HepG2 (cell line): ENCODE measurements at regions of chr11 and their contacts with region 1.

Region 1: DNA sequence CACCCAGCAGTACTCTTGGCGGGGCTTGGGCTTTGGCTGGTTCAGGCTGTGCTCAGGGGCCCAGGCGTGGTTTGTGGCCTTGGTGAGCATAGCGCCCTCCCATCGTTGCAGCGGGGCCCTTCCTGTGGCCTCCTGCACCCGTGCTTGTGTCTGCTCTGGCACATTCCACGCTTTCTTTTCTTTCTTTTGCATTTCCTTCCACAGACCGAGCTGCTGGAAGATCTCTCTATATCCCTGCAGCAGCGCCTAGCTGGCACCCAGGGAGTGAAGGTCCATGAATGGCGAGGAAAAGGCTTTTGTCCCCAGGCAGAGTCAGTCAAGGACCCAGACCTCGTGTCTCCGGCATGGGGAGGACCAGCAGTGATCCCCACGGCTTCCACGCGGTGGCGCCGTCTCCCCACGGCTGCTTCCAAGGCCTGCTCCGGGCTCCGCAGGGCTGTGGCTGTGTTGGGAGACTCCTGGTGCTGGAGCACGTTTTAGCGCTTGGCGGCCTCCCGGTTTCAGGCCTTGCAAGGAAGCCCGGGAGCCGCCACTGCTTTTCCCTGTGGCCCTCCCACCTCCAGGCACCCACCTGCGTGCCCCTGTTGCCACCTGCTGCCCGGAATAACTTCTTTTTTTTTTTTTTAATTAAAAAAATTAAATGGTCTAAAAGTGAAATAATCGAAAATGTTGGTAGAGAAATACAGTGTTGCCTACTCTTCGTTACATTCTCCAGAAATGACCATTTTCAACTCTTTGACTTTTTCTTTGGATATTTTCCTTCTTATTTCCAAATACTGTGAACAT is 28.5 kb downstream of the GLB1L2 start:
- DNase-seq: peak; percentile 65
- ATAC-seq: peak; percentile 97
- H3K4me3 ChIP-seq: no peak overlapping the region
- H3K27ac ChIP-seq: no peak overlapping the region
- H3K4me1 ChIP-seq: peaks cover 6% of the 10 kb centered on the region
- H3K27me3 ChIP-seq: peaks cover 15 to 57% of the 10 kb centered on the region in 2 experiments
- CTCF ChIP-seq: peak; percentile 97
- EP300 ChIP-seq: no peak
- POLR2A ChIP-seq: no peak
- RAD21 ChIP-seq: peak; percentile 97

Region 2: GRCh38 chr11:134417871-134418840 is 57.9 kb after region 1 on chr11:
- CTCF ChIA-PET with region 1: no interaction called
- POLR2A ChIA-PET with region 1: no interaction called
- in situ Hi-C with region 1: no loop called
- intact Hi-C with region 1: no loop called
- DNase-seq: no peak
- ATAC-seq: peak; percentile 44; the same call in 1 of the 3 replicates
- H3K4me3 ChIP-seq: no peak overlapping the region
- H3K27ac ChIP-seq: no peak overlapping the region
- H3K4me1 ChIP-seq: no peaks in the 10 kb centered on the region
- H3K27me3 ChIP-seq: peaks cover 1 to 38% of the 10 kb centered on the region in 2 experiments; a peak in 4 of 5 replicates
- CTCF ChIP-seq: no peak
- EP300 ChIP-seq: no peak
- POLR2A ChIP-seq: no peak
- RAD21 ChIP-seq: no peak

Region 3: DNA sequence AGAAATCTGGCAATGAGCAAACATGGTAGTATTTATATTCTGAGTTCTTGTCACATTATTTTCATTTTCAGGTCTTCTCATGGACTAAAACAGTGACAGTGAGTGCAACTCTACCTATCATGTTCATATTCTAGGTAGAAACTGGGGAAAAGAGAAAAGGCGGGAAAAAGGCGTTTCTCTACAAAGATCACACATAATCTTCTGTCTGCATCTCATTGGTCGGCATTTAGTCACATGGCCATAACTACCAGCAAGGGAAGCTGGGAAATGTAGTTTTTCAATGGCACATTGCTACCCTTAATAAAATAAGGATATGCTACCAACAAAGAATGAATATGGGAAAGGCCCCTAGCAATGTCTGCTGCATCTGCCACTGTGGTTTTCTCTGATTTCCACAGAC is 109.4 kb after region 1 on chr11:
- CTCF ChIA-PET with region 1: no interaction called
- POLR2A ChIA-PET with region 1: no interaction called
- in situ Hi-C with region 1: no loop called
- intact Hi-C with region 1: no loop called
- DNase-seq: no peak
- ATAC-seq: no peak
- H3K4me3 ChIP-seq: no peak overlapping the region
- H3K27ac ChIP-seq: no peak overlapping the region
- H3K4me1 ChIP-seq: peaks cover 25% of the 10 kb centered on the region
- H3K27me3 ChIP-seq: peaks cover 0 to 23% of the 10 kb centered on the region in 2 experiments; a peak in 3 of 5 replicates
- CTCF ChIP-seq: no peak
- EP300 ChIP-seq: no peak
- POLR2A ChIP-seq: no peak
- RAD21 ChIP-seq: no peak

Region 4: DNA sequence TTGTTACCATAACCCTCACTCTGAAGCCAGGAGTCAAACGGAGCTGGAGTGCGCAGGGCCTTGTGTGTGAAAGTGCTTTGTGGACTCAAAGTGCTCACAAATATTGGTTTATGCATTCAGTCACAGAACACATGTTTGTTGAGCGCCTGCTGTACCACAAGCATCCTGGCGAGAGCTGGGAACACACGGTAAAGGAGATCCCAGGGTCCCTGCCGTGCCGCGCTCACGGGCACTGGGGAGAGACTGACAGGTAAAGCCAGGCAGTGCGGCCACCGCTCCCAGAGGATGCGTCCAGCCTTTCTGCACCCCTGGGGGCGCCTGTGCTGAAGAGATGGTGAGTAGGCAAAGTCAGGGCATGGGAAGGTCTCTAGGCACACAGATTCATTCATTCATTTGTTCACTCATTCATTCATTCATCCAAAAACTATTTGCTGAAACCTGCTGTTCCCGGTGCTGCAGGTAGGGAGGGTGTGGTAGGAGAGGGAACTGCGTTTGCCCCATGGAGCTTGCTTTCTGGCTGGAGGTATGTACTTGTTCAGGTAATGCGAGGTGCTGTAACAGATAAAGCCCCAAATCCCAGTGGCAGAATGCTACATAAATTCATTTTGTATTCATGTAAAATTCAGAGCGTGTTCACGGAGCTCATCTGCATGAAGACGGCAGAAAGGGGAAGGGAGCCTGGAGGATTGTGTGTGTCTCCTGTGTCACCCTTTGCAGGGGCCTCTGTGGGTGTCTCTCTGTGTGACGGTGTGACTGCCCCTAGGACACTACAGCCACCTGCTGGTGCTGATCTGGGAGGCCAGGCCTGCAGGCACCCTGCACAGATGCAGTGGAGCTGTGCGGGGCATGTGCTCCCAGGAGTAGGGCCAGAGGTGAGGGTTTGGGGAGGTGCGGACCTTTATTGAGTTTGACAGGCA is 218.8 kb after region 1 on chr11:
- CTCF ChIA-PET with region 1: interaction called, 4 read pairs
- POLR2A ChIA-PET with region 1: no interaction called
- in situ Hi-C with region 1: loop called (anchors 10 kb)
- intact Hi-C with region 1: loop called (anchors 1 kb)
- DNase-seq: peak; percentile 9
- ATAC-seq: peak; percentile 91
- H3K4me3 ChIP-seq: no peak overlapping the region
- H3K27ac ChIP-seq: no peak overlapping the region
- H3K4me1 ChIP-seq: peaks cover 9% of the 10 kb centered on the region; the same call in 1 of the 2 replicates
- H3K27me3 ChIP-seq: peaks cover 5 to 33% of the 10 kb centered on the region in 2 experiments; a peak in 3 of 5 replicates
- CTCF ChIP-seq: peak; percentile 66
- EP300 ChIP-seq: no peak
- POLR2A ChIP-seq: no peak
- RAD21 ChIP-seq: no peak

Region 5: GRCh38 chr11:134725716-134726639 is 365.7 kb after region 1 on chr11:
- CTCF ChIA-PET with region 1: no interaction called
- POLR2A ChIA-PET with region 1: no interaction called
- in situ Hi-C with region 1: loop called (anchors 5 kb)
- intact Hi-C with region 1: no loop called
- DNase-seq: peak; percentile 14
- ATAC-seq: peak; percentile 90
- H3K4me3 ChIP-seq: no peak overlapping the region
- H3K27ac ChIP-seq: no peak overlapping the region
- H3K4me1 ChIP-seq: no peaks in the 10 kb centered on the region
- H3K27me3 ChIP-seq: peaks cover 3 to 23% of the 10 kb centered on the region in 2 experiments; a peak in 3 of 5 replicates
- CTCF ChIP-seq: peak; percentile 57
- EP300 ChIP-seq: no peak
- POLR2A ChIP-seq: no peak
- RAD21 ChIP-seq: no peak